ENCODE measurements at regions of chr10 and their contacts with region 1.

Region 1: DNA sequence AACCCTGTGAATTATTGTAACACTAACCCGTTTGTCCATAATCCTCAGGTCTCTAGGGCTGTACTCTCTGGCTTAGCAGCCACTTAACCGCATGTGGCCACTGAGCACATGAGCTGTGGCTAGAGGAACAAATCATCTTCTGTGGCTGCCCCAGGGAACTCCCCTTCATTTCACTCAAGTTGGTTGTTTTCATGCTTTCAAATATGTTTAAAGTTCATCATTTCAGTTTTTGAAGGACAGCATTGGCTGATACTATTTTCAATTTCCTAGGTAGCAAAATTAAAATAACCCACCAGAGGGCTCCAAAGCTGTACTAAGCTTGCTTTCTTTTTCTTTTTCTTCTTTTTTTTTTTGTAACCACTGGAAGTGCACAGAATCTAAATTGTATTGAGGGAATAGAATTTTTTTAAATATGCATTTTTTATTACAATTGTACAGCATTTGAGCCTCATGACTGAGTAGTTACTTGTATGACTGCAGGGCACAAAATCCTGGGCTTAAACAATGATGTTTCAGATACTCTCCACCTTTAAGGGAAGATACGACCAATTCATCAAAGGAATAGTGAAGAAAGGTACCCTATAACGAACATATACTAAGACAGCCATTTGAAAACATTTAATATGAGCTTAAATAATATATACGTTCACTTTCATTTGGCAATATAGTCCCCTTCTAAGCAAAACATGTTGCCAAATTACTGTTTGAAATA is 38.6 kb downstream of the MRC1 start:
- DNase-seq: peak; percentile 13
- H3K4me3 ChIP-seq: no peak overlapping the region
- CTCF ChIP-seq: peak; percentile 36

Region 2: DNA sequence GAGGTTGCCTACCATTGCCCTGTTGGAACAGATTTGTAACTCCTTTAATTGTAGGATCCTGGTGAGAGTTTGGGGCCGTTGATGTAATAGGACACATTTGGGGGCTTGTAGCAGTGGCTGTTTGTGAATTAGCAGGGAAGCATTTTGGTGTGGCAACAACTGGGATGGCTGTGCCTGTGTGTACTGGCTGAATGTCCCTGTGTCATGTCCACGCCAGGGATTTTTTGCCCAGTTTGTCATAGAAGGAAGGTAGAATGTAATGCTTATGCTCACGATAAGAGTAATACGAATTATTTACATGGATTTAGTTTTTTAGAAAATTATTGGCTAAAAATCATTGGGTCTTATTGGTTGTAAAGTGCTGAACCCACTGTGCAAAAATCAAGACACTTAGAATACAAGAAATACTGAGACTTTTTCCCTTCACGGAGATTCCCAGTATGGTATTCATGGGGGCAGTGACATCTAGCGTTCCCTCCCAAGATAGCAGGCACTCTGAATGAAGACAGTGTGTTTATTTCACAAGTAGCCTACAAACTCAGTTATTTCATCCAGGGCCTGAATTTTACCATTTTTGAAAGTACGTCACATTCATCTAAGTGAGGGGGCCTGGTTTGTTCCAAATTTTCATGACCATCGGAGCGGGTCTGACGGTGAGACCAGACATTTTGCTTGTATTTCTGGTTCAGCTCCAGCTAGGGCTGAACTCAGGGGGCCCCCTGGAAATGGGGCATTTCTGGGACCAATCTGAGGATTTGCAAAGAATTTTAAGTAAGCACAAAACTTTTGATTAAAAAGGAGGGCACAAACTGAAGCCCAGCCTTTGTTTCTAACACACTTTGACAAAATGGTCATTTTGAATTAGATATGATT is 367.2 kb after region 1 on chr10:
- in situ Hi-C with region 1: loop called (anchors 5 kb)
- DNase-seq: peak; percentile 70
- H3K4me3 ChIP-seq: no peak overlapping the region
- CTCF ChIP-seq: peak; percentile 91